Dendritic cell treated with granulocyte-macrophage colony-stimulating factor and Interleukin-4, amounts not matched to agents 40 ng/mL and 50 ng/mL, for 4 days (primary cell): ENCODE measurements at regions of chr1 and their contacts with region 1.

Region 1: DNA sequence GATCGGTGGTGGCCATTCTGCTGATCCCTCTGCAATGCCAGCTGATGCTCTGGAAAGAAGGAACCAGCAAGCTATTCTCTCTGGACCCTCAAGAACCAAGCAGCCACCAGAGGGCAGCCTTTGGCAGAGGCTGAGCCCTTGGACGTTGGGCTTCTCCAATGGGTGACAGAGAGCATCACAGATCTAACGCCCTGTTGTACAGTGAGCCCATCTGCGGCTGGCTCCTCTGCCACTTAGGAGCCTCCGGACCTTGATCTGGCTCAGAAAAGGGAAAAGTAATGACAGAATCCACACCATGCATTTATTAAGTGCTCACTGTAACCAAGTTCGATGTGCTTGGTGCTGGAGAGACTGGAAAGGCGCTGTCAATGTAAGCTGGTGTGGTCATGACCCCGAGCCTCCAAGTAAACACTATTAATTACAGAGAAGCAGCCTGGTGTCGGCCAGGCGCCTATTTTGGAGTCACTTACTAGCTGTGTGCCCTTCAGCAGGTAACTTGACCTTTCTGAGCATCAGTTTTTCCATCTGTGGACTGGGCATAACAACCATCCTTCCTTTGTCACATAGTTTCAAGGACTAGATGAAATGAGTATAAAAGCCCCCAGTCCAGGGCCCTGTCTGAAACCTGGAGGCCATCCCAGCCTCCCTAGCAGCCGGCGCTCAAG is 34.9 kb downstream of the ECE1 start:
- H3K4me3 Mint-ChIP-seq: no peak overlapping the region
- H3K27ac Mint-ChIP-seq: no peak overlapping the region
- H3K4me1 Mint-ChIP-seq: peaks cover 8% of the 10 kb centered on the region
- H3K27me3 Mint-ChIP-seq: peaks cover 49% of the 10 kb centered on the region

Region 2: GRCh38 chr1:21232044-21232443 is 23.4 kb before region 1 on chr1:
- intact Hi-C with region 1: loop called (anchors 2 kb)
- H3K4me3 Mint-ChIP-seq: no peak overlapping the region
- H3K27ac Mint-ChIP-seq: no peak overlapping the region
- H3K4me1 Mint-ChIP-seq: no peaks in the 10 kb centered on the region
- H3K27me3 Mint-ChIP-seq: peaks cover 8% of the 10 kb centered on the region

Region 3: DNA sequence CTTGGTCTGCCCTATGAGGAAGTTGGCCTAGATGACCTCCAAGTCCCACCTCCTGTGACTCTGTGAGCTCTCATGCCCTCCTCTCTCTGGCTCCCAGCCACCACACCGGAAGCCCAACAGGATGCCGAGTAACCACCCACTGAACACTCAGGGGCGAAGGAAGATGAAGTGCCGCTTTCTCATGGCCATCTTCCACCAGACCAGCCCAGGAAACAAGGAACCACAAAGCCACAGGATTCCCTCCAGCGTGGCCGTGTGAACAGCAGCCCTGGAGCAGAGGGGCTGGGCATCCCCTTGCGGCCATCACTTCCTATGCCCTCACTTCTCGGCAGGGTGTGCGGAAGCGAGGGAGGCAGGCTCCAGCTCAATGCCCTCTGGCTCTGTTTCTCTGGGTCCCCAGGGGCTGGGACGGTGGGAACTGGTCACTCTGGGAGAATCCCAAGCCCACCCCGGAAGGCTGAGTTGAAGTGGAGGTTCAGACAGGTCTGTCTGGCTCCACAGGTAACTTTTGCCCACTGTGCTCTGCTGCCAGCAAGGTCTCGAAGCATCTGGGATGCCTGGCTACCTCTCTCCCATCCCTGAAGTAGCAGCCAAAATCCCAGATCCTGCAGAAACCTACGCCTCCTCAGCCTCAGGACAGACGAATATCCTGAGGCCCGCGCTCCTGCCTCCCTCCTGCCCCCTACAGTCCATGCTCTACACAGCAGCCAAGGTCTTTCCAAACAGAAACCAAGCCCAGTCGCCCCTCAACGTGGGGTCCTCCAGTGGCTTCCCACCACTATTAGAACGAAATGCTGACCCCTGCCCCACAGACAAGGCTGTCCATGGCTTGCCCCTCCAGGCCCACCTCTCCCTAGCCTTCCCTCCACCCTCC is 79.0 kb after region 1 on chr1:
- intact Hi-C with region 1: loop called (anchors 1 kb)
- H3K4me3 Mint-ChIP-seq: peak overlapping the region; percentile 62
- H3K27ac Mint-ChIP-seq: peak overlapping the region; percentile 73
- H3K4me1 Mint-ChIP-seq: peaks cover 58% of the 10 kb centered on the region
- H3K27me3 Mint-ChIP-seq: peaks cover 67% of the 10 kb centered on the region